HAP-1 (cell line): ENCODE measurements at regions of chr2 and their contacts with region 1.

Region 1: DNA sequence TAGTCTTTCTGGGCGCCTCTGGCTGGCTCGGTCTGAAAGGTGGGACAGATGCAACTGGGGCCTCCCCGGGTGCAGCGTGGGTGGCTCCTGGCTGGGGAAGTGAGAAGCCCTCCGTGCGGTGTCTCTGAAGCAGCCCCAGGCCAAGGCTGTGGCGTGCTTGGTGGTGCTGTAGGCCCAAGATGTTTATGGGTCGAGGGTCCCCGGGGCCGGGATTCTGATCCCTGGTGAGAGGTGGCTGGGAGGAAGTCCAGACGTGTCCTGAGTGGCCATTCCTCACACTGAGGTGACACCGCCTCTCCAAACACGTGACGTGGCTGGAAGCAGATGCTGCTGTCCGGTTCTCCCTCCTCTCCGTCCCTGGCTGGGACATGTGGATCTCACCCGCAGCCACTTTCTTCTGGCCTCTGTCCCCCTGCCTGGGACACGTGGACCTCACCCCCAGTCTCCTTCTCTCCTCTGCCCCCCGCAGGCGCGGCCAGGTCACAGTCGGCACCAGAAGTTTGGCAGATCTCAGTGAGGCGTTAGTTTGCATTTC is 12.6 kb downstream of the RTP5 start:
- DNase-seq: peak; percentile 7 to 59
- H3K4me3 ChIP-seq: peak overlapping the region; percentile 63
- H3K4me1 ChIP-seq: peaks cover 13% of the 10 kb centered on the region
- H3K27me3 ChIP-seq: no peaks in the 10 kb centered on the region

Region 2: GRCh38 chr2:241355983-241356870 is 525.9 kb before region 1 on chr2 and contains the start of gene FARP2:
- in situ Hi-C with region 1: loop called (anchors 10 kb)
- DNase-seq: peak; percentile 93 to 99
- H3K4me3 ChIP-seq: peak within 1 kb of the TSS; percentile 83
- H3K4me1 ChIP-seq: peaks cover 12% of the 10 kb centered on the region
- H3K27me3 ChIP-seq: no peaks in the 10 kb centered on the region

Region 3: GRCh38 chr2:241926541-241927311 is 44.6 kb after region 1 on chr2:
- in situ Hi-C with region 1: no loop called
- DNase-seq: no peak
- H3K4me3 ChIP-seq: no peak overlapping the region
- H3K4me1 ChIP-seq: no peaks in the 10 kb centered on the region
- H3K27me3 ChIP-seq: no peaks in the 10 kb centered on the region